ENCODE measurements at regions of chr10 and their contacts with region 1.

Region 1: DNA sequence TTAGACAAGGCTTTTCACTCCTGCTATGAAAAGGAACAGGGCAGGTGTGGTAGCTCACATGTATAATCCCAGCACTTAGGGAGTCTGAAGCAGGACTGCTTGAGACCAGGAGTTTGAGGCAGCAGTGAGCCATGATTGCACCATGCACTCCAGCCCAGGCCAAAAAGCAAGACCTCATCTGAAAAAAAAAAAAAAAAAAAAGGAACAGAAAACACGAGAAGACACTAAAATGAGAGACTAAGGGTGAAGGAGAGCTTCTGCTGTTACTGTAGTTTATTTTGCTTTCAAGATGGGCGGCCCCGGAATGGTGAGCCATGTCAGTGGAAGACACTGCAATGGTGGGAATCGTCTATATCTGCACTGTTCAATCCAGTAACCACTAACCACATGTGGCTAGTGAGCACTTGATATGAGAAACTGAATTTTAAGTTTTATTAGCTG is 9.9 kb downstream of the PIP4K2A start:
- DNase-seq: no peak
- H3K4me3 ChIP-seq: no peak overlapping the region
- H3K27ac ChIP-seq: no peak overlapping the region
- H3K4me1 ChIP-seq: peaks cover 0 to 41% (median 28%) of the 10 kb centered on the region in 4 donors
- H3K27me3 ChIP-seq: no peaks in the 10 kb centered on the region
- CTCF ChIP-seq: no peak
- EP300 ChIP-seq: no peak
- POLR2A ChIP-seq: no peak

Region 2: DNA sequence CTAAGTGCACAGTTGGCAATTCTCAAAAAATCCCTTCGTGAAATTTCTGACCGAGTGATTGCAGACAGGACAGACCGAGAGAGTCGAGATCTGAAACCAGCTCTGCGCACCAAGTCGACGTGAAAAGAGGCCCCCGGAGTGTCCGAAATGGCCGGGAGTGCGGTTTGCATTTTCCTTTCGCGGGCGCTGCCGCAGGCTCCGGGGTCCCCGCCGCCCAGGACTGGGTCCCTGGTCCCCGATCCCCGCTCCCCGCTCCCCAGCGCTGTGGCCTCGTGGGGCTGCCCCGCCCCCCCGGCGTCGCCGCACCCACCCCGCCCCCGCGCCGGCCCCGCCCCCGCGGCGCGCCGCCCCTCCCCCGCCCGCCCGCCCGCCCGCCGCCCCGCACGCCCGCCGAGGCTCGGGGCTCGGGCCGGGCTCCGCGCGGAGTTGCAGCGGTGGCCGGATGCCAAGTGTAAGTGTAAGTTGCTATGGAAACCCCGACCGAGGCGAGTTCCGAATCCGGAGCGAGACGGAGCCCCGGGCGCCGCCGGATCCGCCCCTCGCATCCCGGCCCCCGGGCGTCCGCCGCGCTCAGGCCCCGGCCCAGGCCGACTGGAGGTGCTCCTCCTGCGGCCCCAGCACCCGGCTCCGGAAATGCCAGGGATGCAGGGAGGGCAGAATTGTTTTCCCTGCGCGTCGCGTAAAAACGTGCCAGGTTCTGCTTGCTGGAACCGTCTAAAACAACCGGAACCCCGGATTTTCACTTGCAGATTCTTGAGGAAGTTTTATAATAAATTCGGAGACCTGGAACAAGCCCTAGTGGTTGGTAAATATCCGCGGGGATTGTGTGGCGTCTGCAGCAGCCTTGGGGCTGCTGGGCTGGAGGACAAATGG is 379.0 kb before region 1 on chr10:
- intact Hi-C with region 1: loop called (anchors 10 kb)
- DNase-seq: peak; percentile 87
- H3K4me3 ChIP-seq: peak overlapping the region; percentile 40 to 61 (median 60)
- H3K27ac ChIP-seq: peak overlapping the region; percentile 75 to 83 (median 80)
- H3K4me1 ChIP-seq: peaks cover 0 to 39% (median 35%) of the 10 kb centered on the region in 4 donors
- H3K27me3 ChIP-seq: peaks cover 0 to 19% (median 0%) of the 10 kb centered on the region in 3 donors
- CTCF ChIP-seq: no peak
- EP300 ChIP-seq: no peak
- POLR2A ChIP-seq: no peak

Region 3: DNA sequence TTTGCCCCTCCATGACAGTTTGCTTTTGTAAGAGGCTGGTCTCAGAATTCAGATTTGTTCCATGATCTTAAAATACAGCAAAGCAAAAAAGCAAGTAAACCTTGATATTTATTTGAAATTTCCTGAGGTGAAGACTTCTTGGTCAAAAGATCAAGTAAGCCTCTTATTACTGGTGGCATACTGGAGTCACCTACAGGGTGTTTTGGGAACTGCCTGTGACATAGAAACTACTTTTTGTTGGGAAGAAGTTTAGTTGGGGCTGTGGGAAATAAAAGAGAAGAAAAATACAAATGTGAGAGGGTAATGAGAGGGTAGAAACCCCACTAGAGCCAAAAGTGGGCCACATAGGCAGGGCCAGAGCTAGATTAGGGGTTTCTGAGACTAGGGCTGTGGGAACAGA is 952.2 kb after region 1 on chr10:
- intact Hi-C with region 1: no loop called
- DNase-seq: no peak
- H3K4me3 ChIP-seq: no peak overlapping the region
- H3K27ac ChIP-seq: no peak overlapping the region
- H3K4me1 ChIP-seq: no peaks in the 10 kb centered on the region
- H3K27me3 ChIP-seq: no peaks in the 10 kb centered on the region
- CTCF ChIP-seq: peak in 3 of 4 experiments; percentile 10 to 33 (median 11)
- EP300 ChIP-seq: no peak
- POLR2A ChIP-seq: no peak